Activated CD8-positive, alpha-beta T cell treated with anti-CD3 and anti-CD28 coated beads, Interleukin-2, amount 10 ng/mL, durations not matched to agents 7 days and 5 days (primary cell): ENCODE measurements at regions of chr7 and their contacts with region 1.

Region 1: DNA sequence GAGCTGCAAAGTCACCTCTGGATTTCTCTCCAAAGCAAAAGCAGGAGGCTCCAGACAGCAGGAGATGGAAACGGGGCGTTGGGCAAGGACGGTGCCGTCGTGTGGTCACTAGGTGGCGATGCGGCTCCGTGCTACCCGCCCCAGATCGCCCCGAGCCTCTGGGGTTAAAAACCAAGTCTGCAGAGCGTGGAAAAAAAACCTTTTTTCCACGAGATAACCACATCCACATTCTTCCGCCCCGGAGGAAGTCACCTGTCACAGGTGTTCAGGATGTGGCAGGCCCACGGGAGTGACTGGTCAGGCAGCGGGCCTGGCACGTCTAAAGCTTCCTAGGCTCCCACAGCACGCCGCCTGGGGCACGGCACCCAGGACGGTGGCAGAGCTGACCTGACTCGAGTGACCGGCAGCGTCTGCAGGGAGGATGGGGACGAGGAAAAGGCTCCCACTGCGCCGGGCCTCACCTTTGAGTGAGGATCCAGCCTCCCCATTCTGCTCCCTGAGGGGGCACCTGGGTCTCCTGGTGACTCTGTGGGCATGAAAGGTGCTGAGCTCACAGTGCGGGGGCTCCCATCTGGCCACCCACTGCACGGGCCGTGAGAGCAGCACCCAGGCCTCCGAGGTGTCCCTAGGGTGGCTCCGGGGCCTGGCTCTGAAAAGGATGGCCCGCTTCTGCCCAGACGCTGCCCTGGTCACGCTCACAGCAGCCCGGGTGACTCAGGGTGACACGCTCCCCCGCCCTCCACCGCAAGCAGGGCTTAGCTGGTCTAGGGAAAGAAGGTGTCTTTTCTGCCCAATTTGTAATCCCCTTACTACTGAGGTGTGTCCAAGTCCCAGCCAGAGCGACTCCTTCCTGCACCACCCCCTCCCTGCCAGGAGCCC is 71.3 kb upstream of the TNRC18 start:
- DNase-seq: peak; percentile 85
- ATAC-seq: peak; percentile 91
- H3K4me3 Mint-ChIP-seq: no peak overlapping the region
- H3K27ac Mint-ChIP-seq: peak overlapping the region; percentile 46
- H3K4me1 Mint-ChIP-seq: peaks cover 44% of the 10 kb centered on the region
- H3K27me3 Mint-ChIP-seq: no peaks in the 10 kb centered on the region

Region 2: DNA sequence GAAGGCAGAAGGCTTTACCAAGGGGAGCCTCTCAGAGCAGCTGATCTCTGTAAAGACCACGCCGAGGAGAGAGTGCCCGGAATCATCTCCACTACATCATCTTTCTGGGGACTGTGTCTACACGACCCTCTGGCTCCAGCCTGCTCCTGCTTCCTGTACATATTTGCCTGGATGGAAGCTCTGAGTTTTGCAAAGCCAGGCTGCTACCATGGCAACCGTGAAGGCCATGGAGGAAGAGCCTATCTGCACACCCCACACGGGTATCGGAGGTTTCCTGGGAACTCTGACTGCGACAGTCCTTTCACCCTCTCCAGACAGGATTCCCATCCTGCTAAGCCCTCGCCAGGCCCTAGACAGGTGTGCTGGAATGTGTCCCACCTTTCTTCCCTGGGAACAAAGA is 12.1 kb after region 1 on chr7:
- CTCF ChIA-PET with region 1: interaction called, 15 read pairs
- POLR2A ChIA-PET with region 1: interaction called, 4 read pairs
- DNase-seq: no peak
- ATAC-seq: no peak
- H3K4me3 Mint-ChIP-seq: no peak overlapping the region
- H3K27ac Mint-ChIP-seq: no peak overlapping the region
- H3K4me1 Mint-ChIP-seq: no peaks in the 10 kb centered on the region
- H3K27me3 Mint-ChIP-seq: no peaks in the 10 kb centered on the region

Region 3: GRCh38 chr7:5567790-5568189 is 72.9 kb after region 1 on chr7:
- CTCF ChIA-PET with region 1: interaction called, 14 read pairs
- POLR2A ChIA-PET with region 1: interaction called, 3 read pairs
- DNase-seq: no peak
- ATAC-seq: no peak
- H3K4me3 Mint-ChIP-seq: no peak overlapping the region
- H3K27ac Mint-ChIP-seq: no peak overlapping the region
- H3K4me1 Mint-ChIP-seq: peaks cover 33% of the 10 kb centered on the region
- H3K27me3 Mint-ChIP-seq: peaks cover 9% of the 10 kb centered on the region

Region 4: GRCh38 chr7:5694912-5695726 is 200.2 kb after region 1 on chr7:
- CTCF ChIA-PET with region 1: interaction called, 47 read pairs
- POLR2A ChIA-PET with region 1: interaction called, 3 read pairs
- DNase-seq: peak; percentile 89
- ATAC-seq: peak; percentile 81
- H3K4me3 Mint-ChIP-seq: peak overlapping the region; percentile 73
- H3K27ac Mint-ChIP-seq: peak overlapping the region; percentile 89
- H3K4me1 Mint-ChIP-seq: peaks cover 94% of the 10 kb centered on the region
- H3K27me3 Mint-ChIP-seq: no peaks in the 10 kb centered on the region

Region 5: DNA sequence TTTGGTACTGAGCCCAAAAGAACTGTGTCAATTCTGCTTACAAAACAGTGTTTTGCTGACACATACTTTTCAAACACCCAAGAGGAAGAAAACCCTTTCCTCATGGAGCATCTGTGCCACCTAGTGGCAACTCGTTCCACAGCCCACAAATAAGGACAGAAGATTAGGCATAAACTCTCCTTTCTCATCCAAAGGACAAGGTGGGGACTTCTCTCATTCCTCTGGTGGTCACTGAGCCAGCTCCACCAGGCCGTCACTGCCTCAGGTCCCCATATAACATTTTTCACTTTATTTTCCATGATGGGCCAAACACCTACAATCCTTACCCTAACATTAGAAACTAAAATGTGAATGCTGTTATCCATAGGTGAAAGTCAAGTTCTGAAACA is 209.6 kb after region 1 on chr7:
- CTCF ChIA-PET with region 1: interaction called, 47 read pairs
- POLR2A ChIA-PET with region 1: interaction called, 4 read pairs
- DNase-seq: peak; percentile 80
- ATAC-seq: no peak
- H3K4me3 Mint-ChIP-seq: no peak overlapping the region
- H3K27ac Mint-ChIP-seq: no peak overlapping the region
- H3K4me1 Mint-ChIP-seq: peaks cover 35% of the 10 kb centered on the region
- H3K27me3 Mint-ChIP-seq: no peaks in the 10 kb centered on the region